Activated CD4-positive, alpha-beta T cell treated with anti-CD3 and anti-CD28 coated beads, Interleukin-2, amount 10 ng/mL, durations not matched to agents 24 days and 14 days (primary cell): ENCODE measurements at regions of chr10 and their contacts with region 1.

Region 1: GRCh38 chr10:102917962-102918816 is at the start of gene CNNM2:
- DNase-seq: peak; percentile 100
- H3K4me3 Mint-ChIP-seq: peak within 1 kb of the TSS; percentile 96
- H3K27ac Mint-ChIP-seq: peak within 1 kb of the TSS; percentile 94
- H3K4me1 Mint-ChIP-seq: peaks cover 43% of the 10 kb centered on the region
- H3K27me3 Mint-ChIP-seq: peaks cover 2% of the 10 kb centered on the region
- total RNA-seq, gene CNNM2: 5.6 and 6.7 TPM in 2 replicates

Region 2: DNA sequence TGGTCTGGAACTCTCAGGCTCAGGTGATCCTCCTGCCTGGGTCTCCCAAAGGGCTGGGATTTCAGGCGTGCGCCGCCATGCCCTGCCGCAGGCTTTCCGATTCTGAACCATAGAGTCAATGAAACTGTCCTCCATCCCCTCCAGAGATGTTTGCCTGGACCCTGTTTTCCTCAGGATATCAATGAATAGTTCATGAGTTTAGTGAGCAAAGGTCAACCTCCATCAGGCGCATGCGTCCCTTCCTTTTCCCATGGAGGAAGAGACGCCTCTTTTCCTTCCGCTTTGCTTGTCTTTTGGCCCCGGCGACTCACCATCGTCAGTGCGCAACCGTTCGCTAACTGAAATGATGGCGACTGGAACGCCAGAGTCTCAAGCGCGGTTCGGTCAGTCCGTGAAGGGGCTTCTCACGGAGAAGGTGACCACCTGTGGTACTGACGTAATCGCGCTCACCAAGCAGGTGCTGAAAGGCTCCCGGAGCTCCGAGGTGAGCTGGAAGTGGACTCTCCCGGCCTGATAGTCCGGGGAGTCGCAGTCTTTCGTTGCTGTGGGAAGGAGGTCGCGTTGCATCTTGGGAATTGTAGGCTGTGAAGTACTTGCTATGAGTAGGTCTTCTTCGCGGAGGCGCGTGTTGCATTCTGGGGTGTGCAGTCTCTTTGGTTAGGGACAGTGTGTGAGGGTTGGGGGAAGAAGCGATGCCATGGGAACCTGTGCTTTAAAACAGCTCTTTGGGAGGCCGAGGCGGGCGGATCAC is 64.1 kb before region 1 on chr10 and contains the start of gene BORCS7:
- intact Hi-C with region 1: loop called (anchors 1 kb)
- DNase-seq: peak; percentile 96
- H3K4me3 Mint-ChIP-seq: peak within 1 kb of the TSS; percentile 98
- H3K27ac Mint-ChIP-seq: peak within 1 kb of the TSS; percentile 97
- H3K4me1 Mint-ChIP-seq: peaks cover 13% of the 10 kb centered on the region
- H3K27me3 Mint-ChIP-seq: no peaks in the 10 kb centered on the region
- total RNA-seq, gene BORCS7: 8.1 and 9.8 TPM in 2 replicates

Region 3: GRCh38 chr10:103053659-103054581 is 135.7 kb after region 1 on chr10:
- intact Hi-C with region 1: loop called (anchors 5 kb)
- DNase-seq: peak; percentile 93
- H3K4me3 Mint-ChIP-seq: peak overlapping the region; percentile 85
- H3K27ac Mint-ChIP-seq: peak overlapping the region; percentile 86
- H3K4me1 Mint-ChIP-seq: peaks cover 13% of the 10 kb centered on the region
- H3K27me3 Mint-ChIP-seq: no peaks in the 10 kb centered on the region

Region 4: DNA sequence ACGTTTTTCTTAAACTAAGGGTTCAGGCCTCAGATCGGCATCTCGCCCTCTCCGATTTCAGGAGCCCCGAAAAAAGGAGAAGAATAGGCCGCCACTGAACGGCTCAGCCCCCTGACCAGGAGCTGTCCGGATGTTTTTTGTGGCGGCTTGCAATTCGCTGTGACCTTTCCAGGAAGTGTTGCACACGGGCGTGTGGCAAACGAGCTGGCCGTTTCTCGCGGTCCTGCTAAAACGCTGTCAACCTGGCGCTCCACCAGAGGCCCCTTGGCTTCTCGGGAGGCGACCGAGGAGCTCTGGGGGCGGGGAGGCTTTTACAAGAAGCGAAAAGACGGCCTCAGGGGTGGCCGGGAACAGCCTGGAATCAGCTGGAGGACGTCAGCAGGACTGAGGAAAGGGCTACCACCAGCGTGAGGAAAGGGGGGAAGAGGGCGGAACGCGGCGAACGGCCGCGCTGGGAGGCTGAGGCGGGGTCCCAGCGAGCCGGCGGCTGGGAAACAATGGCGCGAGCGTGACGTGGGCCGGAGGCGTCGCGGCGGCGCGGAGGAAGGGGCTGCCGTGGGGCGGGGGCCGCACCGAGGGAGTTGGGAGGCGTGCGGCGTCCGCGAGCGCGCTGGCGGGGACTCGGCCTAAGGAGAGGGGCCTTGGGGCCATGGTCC is 274.4 kb after region 1 on chr10:
- intact Hi-C with region 1: loop called (anchors 2 kb)
- DNase-seq: peak; percentile 91
- H3K4me3 Mint-ChIP-seq: peak overlapping the region; percentile 100
- H3K27ac Mint-ChIP-seq: peak overlapping the region; percentile 99
- H3K4me1 Mint-ChIP-seq: peaks cover 31% of the 10 kb centered on the region
- H3K27me3 Mint-ChIP-seq: no peaks in the 10 kb centered on the region

Region 5: GRCh38 chr10:103307594-103307993 is 389.4 kb after region 1 on chr10:
- intact Hi-C with region 1: no loop called
- DNase-seq: no peak
- H3K4me3 Mint-ChIP-seq: no peak overlapping the region
- H3K27ac Mint-ChIP-seq: no peak overlapping the region
- H3K4me1 Mint-ChIP-seq: no peaks in the 10 kb centered on the region
- H3K27me3 Mint-ChIP-seq: no peaks in the 10 kb centered on the region

Region 6: GRCh38 chr10:103367782-103368518 is 449.8 kb after region 1 on chr10 and contains the start of gene TAF5:
- intact Hi-C with region 1: loop called (anchors 1 kb)
- DNase-seq: peak; percentile 97
- H3K4me3 Mint-ChIP-seq: peak within 1 kb of the TSS; percentile 93
- H3K27ac Mint-ChIP-seq: peak within 1 kb of the TSS; percentile 92
- H3K4me1 Mint-ChIP-seq: peaks cover 12% of the 10 kb centered on the region
- H3K27me3 Mint-ChIP-seq: peaks cover 4% of the 10 kb centered on the region
- total RNA-seq, gene TAF5: 11.9 and 12.1 TPM in 2 replicates